ENCODE measurements at regions of chr10 and their contacts with region 1.

Region 1: DNA sequence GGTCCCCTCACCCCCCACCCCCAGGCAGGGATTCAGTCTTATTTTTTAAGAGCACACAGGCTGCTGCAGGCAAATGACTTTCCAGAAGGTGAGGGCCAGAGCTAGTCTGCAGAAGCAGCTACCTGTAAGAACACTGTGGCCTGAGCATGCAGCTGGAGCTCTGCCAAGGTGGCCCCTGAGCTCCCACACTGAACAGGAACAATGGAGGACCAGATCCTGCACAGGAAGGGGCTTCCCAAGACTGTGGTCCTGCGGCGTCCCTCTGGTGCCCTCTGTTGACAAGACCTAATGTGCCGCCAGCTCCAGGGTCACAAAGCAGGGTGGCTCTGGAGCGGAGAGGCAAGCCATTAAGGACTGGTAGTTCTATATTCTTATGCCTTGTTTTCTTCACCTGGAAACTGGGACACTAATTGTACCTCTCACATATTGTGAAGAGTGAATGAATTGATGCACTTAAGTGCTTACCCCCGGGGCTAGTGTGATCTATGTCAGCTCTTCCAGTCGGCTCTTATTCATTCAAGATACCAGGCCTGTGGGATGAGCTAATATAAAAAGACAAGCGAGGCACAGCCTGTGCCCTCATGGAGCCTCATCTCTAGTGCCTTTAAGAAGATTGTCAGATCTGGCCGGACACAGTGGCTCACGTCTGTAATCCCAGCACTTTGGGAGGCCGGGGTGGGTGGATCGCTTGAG is 8.0 kb upstream of the BEND7 start:
- DNase-seq: peak; percentile 57
- ATAC-seq: peak; percentile 88
- H3K4me3 ChIP-seq: no peak overlapping the region
- H3K27ac ChIP-seq: no peak overlapping the region
- H3K4me1 ChIP-seq: no peaks in the 10 kb centered on the region
- H3K27me3 ChIP-seq: no peaks in the 10 kb centered on the region
- CTCF ChIP-seq: peak; percentile 61

Region 2: DNA sequence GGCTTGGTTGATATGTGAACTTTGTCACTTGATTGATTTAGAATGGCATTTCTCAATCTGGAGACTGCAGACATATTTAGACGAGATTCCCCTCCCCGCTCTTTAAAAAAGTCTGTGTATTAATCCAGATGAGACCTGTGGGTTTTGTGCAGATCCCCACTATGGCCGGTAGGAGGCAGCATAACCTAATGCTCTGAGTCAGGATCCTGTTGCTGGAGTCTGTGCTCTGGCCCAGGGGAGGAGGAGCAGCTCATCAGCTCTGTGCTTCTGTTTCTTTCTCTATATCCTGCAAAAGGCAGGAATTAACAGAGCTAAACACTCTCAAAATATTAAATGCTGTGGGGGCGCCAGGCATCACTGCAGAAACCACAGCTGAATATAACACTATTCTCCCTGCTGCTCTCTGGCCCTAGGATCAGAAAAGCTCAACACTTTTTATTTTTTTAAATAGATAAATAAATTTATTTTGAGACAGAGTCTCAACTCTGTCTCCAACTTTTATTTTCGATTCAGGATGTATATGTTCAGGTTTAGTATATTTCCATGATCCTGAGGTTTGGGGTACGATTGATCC is 164.8 kb before region 1 on chr10:
- CTCF ChIA-PET with region 1: interaction called, 10 read pairs
- POLR2A ChIA-PET with region 1: no interaction called
- intact Hi-C with region 1: loop called (anchors 1 kb)
- DNase-seq: peak; percentile 79
- ATAC-seq: peak; percentile 97
- H3K4me3 ChIP-seq: no peak overlapping the region
- H3K27ac ChIP-seq: no peak overlapping the region
- H3K4me1 ChIP-seq: no peaks in the 10 kb centered on the region
- H3K27me3 ChIP-seq: no peaks in the 10 kb centered on the region
- CTCF ChIP-seq: peak; percentile 80

Region 3: GRCh38 chr10:13586676-13587355 is 50.0 kb after region 1 on chr10 and contains the start of gene PRPF18:
- CTCF ChIA-PET with region 1: no interaction called
- POLR2A ChIA-PET with region 1: no interaction called
- intact Hi-C with region 1: loop called (anchors 10 kb)
- DNase-seq: peak; percentile 85
- ATAC-seq: peak; percentile 97
- H3K4me3 ChIP-seq: peak within 1 kb of the TSS; percentile 89
- H3K27ac ChIP-seq: no peak within 1 kb of the TSS
- H3K4me1 ChIP-seq: no peaks in the 10 kb centered on the region
- H3K27me3 ChIP-seq: no peaks in the 10 kb centered on the region
- CTCF ChIP-seq: peak; percentile 74
- total RNA-seq, gene PRPF18: 10.2 and 13.7 TPM in 2 replicates